Activated CD8-positive, alpha-beta T cell treated with anti-CD3 and anti-CD28 coated beads for 36 hours (primary cell): ENCODE measurements at regions of chr2 and their contacts with region 1.

Region 1: DNA sequence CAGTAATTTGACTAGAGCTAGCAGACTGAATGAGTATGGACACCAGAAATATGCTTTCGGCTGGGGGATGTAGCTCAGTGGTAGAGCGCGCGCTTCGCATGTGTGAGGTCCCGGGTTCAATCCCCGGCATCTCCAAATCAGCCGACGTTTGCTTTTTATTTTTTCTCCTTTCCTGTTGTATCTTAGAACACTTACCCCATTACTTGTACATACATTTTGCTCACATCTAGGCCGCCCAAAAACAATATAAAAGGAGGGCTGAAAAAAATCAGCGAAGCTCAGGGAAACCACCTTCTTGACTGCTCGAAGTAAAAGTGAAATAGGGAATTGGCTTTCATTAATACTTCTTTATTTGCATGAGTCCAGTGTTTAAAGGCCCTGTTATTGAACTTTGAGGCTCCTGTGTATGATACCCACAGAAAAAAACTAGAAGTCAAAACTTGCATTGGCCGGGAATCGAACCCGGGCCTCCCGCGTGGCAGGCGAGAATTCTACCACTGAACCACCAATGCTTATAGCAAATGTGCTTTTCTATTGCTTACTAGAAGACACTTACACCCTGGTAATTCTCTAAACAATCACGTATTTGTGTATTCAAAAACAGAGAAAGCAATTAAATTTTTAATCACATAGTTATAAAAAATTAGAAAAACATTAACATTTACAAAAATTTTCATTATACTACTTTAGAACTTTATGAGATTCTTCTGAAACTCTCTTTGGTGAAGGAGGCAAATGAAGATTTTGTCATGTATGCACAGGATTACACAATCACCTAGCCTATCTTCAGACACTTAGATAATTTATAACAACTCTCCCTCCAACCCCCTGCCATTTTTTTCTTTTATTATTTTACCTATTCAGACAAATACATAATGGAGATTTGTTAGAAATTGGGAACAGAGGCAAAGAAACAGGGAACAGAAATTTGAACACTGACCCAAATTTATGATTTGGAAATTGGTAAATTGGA is 35.2 kb upstream of the GPD2 start:
- DNase-seq: peak; percentile 85
- ATAC-seq: peak; percentile 73
- H3K4me3 Mint-ChIP-seq: peak overlapping the region; percentile 80
- H3K27ac Mint-ChIP-seq: peak overlapping the region; percentile 91
- H3K4me1 Mint-ChIP-seq: peaks cover 22% of the 10 kb centered on the region
- H3K27me3 Mint-ChIP-seq: peaks cover 2% of the 10 kb centered on the region
- CTCF ChIP-seq: no peak

Region 2: DNA sequence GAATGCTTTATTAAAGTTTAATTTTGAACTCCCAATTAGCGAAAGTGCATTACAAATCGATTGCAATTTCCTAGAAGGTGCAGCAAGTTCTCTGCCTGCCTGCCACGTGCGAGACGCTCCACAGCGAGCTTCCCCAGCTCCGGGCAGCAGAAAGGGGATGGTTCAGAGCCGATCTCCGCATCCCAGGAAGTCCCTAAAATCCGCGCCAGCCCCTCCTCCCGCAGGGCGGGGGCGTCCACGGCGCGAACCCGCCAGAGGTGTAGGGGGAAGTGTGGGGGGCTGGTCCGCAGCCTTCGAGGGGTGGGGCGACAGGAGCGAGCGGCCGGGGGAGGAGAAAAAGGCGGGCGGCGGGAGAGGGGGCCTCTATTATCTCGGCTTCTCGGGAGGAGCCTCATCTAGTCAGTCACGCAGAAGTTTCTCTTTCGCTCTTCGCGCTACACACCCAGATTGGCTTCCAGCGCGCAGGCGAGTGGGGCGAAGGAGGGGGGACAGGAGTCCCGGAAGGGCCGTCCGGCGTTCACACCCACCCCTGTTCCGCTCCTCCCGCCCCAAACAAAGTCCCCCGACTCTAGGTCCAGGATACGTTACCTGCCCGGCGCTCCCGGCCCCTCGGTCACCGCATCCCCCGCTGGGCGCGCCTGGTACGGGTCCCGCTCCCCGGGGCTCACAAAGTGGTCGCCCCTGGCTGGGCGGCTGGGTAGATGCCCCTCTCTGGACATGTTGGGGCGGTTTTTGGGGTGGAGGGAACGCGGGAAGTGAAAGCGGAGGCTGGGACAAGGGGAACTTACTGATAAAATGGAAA is 59.3 kb before region 1 on chr2:
- CTCF ChIA-PET with region 1: interaction called, 7 read pairs
- POLR2A ChIA-PET with region 1: interaction called, 41 read pairs
- intact Hi-C with region 1: loop called (anchors 1 kb)
- DNase-seq: peak; percentile 94
- ATAC-seq: peak; percentile 81
- H3K4me3 Mint-ChIP-seq: peak overlapping the region; percentile 80
- H3K27ac Mint-ChIP-seq: peak overlapping the region; percentile 97
- H3K4me1 Mint-ChIP-seq: peaks cover 45% of the 10 kb centered on the region
- H3K27me3 Mint-ChIP-seq: no peaks in the 10 kb centered on the region
- CTCF ChIP-seq: no peak